ENCODE measurements at regions of chr5 and their contacts with region 1.

Region 1: DNA sequence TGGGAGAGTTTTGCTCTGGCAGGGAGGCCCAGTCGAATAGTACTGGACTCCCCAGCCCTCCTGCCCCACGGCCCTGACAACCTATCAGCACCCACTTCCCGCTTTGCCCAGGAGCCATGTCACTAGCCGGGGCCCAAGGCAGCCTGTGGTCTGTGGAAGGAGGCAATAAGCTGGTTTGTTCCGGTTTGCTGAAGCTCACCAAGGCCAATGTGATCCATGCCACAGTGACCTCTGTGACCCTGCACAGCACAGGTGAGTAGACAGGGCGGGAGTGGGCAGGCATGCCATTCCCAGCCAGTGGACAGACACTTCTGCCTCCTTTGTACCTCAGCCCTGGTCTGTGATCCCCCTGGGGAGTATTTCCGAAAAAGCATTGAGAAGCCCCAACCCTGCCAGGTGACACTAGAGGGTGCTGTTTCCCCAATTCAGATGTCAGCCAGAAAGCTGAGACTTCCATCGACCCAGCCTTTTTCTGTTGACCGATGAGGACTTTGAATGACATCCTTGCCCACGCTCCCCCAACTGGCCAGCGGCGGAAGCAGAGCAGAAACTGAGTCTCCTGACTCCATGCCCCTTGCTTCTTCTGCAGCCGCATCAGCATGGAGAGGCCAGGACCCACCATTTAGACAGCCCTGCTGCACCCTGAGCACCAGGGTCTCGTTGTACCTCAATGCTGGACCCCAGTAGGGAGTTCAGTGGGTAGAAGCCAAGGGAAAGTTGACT is 9.6 kb downstream of the PCYOX1L start:
- DNase-seq: no peak
- H3K4me3 ChIP-seq: peak overlapping the region; percentile 13 to 24 (median 14)
- H3K27ac ChIP-seq: peak overlapping the region; percentile 62 to 97 (median 68)
- H3K4me1 ChIP-seq: peaks cover 16 to 44% (median 35%) of the 10 kb centered on the region in 4 donors
- H3K27me3 ChIP-seq: no peaks in the 10 kb centered on the region
- CTCF ChIP-seq: peak; percentile 74 to 87 (median 77)
- EP300 ChIP-seq: no peak
- POLR2A ChIP-seq: no peak

Region 2: DNA sequence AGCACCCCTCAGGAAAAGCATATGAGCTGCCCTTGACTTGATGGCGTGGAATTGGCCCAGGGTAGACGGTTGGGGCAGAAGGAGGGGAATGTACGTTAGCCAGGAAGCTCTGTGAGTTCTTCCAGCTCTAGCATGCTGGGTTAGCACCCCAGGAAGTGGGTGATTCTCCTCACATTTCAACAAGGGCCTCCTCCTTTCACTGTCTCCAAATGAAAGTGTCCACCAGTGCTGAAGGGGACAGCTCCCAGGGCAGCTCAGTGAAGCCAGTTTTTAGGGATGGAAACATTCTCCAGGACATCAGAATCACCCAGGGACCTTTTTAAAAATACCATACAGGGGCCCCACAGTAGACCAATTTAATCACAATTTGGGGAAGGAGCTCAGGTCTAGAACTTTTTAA is 112.9 kb before region 1 on chr5:
- intact Hi-C with region 1: no loop called
- DNase-seq: no peak
- H3K4me3 ChIP-seq: no peak overlapping the region
- H3K27ac ChIP-seq: no peak overlapping the region
- H3K4me1 ChIP-seq: no peaks in the 10 kb centered on the region
- H3K27me3 ChIP-seq: no peaks in the 10 kb centered on the region
- CTCF ChIP-seq: no peak
- EP300 ChIP-seq: no peak
- POLR2A ChIP-seq: no peak

Region 3: GRCh38 chr5:149317281-149318048 is 49.9 kb before region 1 on chr5:
- intact Hi-C with region 1: loop called (anchors 5 kb)
- DNase-seq: no peak
- H3K4me3 ChIP-seq: no peak overlapping the region
- H3K27ac ChIP-seq: peak overlapping the region; percentile 32 to 58 (median 46)
- H3K4me1 ChIP-seq: peaks cover 23 to 30% (median 26%) of the 10 kb centered on the region in 4 donors
- H3K27me3 ChIP-seq: no peaks in the 10 kb centered on the region
- CTCF ChIP-seq: peak; percentile 69 to 76 (median 70)
- EP300 ChIP-seq: no peak
- POLR2A ChIP-seq: no peak

Region 4: GRCh38 chr5:149442563-149443182 is 75.3 kb after region 1 on chr5:
- intact Hi-C with region 1: loop called (anchors 5 kb)
- DNase-seq: no peak
- H3K4me3 ChIP-seq: no peak overlapping the region
- H3K27ac ChIP-seq: peak overlapping the region; percentile 86 to 89 (median 88)
- H3K4me1 ChIP-seq: peaks cover 26 to 68% (median 52%) of the 10 kb centered on the region in 4 donors
- H3K27me3 ChIP-seq: no peaks in the 10 kb centered on the region
- CTCF ChIP-seq: peak; percentile 89 to 97 (median 92)
- EP300 ChIP-seq: no peak
- POLR2A ChIP-seq: no peak

Region 5: DNA sequence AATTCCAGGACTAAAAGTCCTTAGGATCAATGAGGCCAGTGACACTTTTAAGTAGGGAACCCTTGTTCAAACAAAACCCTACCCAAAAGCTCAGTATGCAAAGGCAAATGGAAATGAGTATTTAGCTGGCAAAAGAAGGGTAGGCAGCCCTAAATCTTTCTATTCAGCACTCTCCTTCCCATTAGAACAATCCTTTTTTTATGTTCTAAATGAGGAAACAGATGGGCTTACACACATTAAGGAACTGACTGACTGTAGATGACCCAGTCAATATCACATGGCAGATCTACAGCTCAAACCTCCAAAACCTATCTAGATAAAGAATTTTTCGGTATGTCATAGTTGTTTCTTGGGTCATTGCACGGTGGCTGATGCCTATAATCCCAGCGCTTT is 176.6 kb after region 1 on chr5:
- intact Hi-C with region 1: no loop called
- DNase-seq: no peak
- H3K4me3 ChIP-seq: peak overlapping the region in 3 of 4 donors; percentile 22 to 32 (median 32)
- H3K27ac ChIP-seq: peak overlapping the region; percentile 69 to 99 (median 86)
- H3K4me1 ChIP-seq: peaks cover 90 to 100% (median 97%) of the 10 kb centered on the region in 4 donors
- H3K27me3 ChIP-seq: no peaks in the 10 kb centered on the region
- CTCF ChIP-seq: no peak
- EP300 ChIP-seq: no peak
- POLR2A ChIP-seq: no peak

Region 6: DNA sequence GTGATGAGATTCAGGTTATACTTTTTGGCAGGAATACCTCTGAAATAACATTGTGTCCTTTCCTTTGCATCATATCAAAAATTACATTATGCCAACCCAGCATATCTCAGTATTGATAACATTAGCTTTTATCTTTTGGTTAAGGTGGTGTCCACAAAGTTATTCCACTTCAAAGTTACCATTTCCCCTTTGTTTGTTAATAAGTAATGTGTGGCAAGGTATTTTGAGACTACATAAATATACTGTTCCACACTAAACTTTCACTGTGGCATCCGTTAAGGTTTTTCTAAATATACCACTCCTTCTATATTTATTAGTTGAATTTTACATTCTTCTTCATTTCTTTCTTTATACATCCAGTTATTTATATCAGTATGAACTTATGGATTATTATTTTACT is 199.8 kb after region 1 on chr5:
- intact Hi-C with region 1: loop called (anchors 5 kb)
- DNase-seq: no peak
- H3K4me3 ChIP-seq: no peak overlapping the region
- H3K27ac ChIP-seq: no peak overlapping the region
- H3K4me1 ChIP-seq: peaks cover 21 to 29% (median 26%) of the 10 kb centered on the region in 4 donors
- H3K27me3 ChIP-seq: no peaks in the 10 kb centered on the region
- CTCF ChIP-seq: no peak
- EP300 ChIP-seq: no peak
- POLR2A ChIP-seq: no peak

Measured in esophagus muscularis mucosa (tissue), 4 donors.